Naive thymus-derived CD4-positive, alpha-beta T cell (primary cell): ENCODE measurements at regions of chr6 and their contacts with region 1.

Region 1: DNA sequence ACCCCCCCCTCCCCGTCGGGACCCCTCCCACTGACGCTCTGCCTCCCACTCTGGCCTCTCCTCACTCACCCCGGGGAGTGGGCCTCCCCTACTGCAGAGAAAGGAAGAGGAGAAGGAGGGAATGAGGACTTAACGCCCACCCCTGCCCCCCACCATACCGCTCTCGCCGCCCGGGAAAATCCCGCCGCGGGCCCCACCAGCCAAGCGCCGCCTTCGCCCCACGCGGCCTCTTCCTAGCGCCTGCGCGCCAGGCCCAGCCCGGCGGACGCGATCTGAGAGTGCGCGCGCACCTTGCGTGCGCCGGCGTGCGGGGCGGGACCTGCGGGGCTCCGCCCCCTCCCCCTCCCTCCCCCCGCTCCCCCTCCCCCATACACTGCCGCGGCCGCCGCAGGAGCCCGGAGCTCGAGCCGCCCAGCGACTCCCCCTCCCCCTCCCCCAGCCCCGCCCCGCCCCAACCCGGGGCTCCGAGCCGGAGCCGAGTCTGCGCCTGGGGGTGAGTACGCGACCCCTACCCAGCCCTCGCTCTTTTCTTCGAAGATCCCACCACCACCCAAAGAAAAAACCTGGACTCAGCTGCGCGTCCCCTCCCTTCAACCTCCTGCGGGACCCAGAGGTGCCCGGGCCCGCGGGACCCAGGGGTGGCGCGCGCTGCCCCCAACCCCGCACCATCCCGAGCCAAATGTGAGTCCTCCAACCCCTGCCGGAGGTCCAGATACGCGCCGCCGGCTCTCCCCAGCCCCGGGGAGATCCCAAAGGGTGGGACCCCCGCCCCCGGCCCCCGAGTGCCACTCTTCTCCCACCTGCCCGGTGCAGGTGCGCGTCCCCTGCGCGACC is at the starts of genes MRPL14 and TMEM63B:
- DNase-seq: peak; percentile 82 to 97 (median 90)
- ATAC-seq: peak; percentile 91
- H3K4me3 ChIP-seq: peak within 1 kb of the TSS; percentile 71
- H3K4me3 Mint-ChIP-seq: peak within 1 kb of the TSS; percentile 91 to 99 (median 96)
- H3K27ac ChIP-seq: peak within 1 kb of the TSS; percentile 97
- H3K27ac Mint-ChIP-seq: peak within 1 kb of the TSS; percentile 87 to 99 (median 96)
- H3K4me1 ChIP-seq: peaks cover 36 to 41% of the 10 kb centered on the region in 2 donors
- H3K4me1 Mint-ChIP-seq: peaks cover 46 to 75% (median 57%) of the 10 kb centered on the region in 7 donors
- H3K27me3 ChIP-seq: no peaks in the 10 kb centered on the region
- H3K27me3 Mint-ChIP-seq: no peaks in the 10 kb centered on the region
- total RNA-seq, gene MRPL14: 12.6 to 58.3 (median 15.8) TPM
- total RNA-seq, gene TMEM63B: 16.2 to 21.4 (median 18.1) TPM

Region 2: DNA sequence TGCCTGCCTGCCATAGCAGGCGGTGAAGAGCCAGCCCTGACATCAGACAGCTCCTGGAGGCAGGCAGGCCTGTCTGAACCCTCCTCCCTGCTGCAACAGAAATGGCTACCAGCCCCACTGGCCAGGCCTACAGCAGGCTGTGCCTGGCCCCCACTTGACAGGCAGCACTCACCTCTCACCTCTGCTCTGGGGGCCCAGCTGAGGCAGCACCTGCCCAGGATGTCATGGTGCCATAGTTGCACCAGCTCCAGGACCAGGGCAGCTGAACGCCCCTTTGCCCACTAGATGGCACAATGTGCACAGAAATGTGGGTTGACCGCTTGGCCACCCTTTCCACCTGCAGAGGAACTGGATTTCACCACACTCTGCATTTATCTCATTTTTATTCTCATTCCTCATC is 30.8 kb before region 1 on chr6:
- CTCF ChIA-PET with region 1: interaction called, 4 read pairs
- POLR2A ChIA-PET with region 1: no interaction called
- intact Hi-C with region 1: loop called in 1 of 2 experiments (anchors 2 kb)
- DNase-seq: peak; percentile 45 to 78 (median 68)
- ATAC-seq: peak; percentile 92
- H3K4me3 ChIP-seq: no peak overlapping the region
- H3K4me3 Mint-ChIP-seq: no peak overlapping the region
- H3K27ac ChIP-seq: no peak overlapping the region
- H3K27ac Mint-ChIP-seq: no peak overlapping the region
- H3K4me1 ChIP-seq: no peaks in the 10 kb centered on the region
- H3K4me1 Mint-ChIP-seq: peaks cover 0 to 10% (median 0%) of the 10 kb centered on the region in 7 donors
- H3K27me3 ChIP-seq: no peaks in the 10 kb centered on the region
- H3K27me3 Mint-ChIP-seq: no peaks in the 10 kb centered on the region

Region 3: GRCh38 chr6:44221291-44221960 is 94.0 kb after region 1 on chr6:
- CTCF ChIA-PET with region 1: no interaction called
- POLR2A ChIA-PET with region 1: no interaction called
- intact Hi-C with region 1: loop called in 1 of 2 experiments (anchors 1 kb)
- DNase-seq: peak; percentile 56 to 75 (median 71)
- ATAC-seq: peak; percentile 75
- H3K4me3 ChIP-seq: no peak overlapping the region
- H3K4me3 Mint-ChIP-seq: peak overlapping the region in 7 of 10 donors; percentile 27 to 93 (median 59)
- H3K27ac ChIP-seq: no peak overlapping the region
- H3K27ac Mint-ChIP-seq: peak overlapping the region in 5 of 9 donors; percentile 26 to 91 (median 48)
- H3K4me1 ChIP-seq: peaks cover 15 to 16% of the 10 kb centered on the region in 2 donors
- H3K4me1 Mint-ChIP-seq: peaks cover 6 to 48% (median 31%) of the 10 kb centered on the region in 7 donors
- H3K27me3 ChIP-seq: no peaks in the 10 kb centered on the region
- H3K27me3 Mint-ChIP-seq: peaks cover 0 to 18% (median 0%) of the 10 kb centered on the region in 5 donors

Region 4: GRCh38 chr6:44312901-44313788 is 185.7 kb after region 1 on chr6 and contains the start of gene AARS2:
- CTCF ChIA-PET with region 1: interaction called, 6 read pairs
- POLR2A ChIA-PET with region 1: no interaction called
- intact Hi-C with region 1: loop called in 1 of 2 experiments (anchors 1 kb)
- DNase-seq: peak; percentile 79 to 95 (median 88)
- ATAC-seq: peak; percentile 99
- H3K4me3 ChIP-seq: peak within 1 kb of the TSS; percentile 91
- H3K4me3 Mint-ChIP-seq: peak within 1 kb of the TSS; percentile 94 to 100 (median 96)
- H3K27ac ChIP-seq: peak within 1 kb of the TSS; percentile 89
- H3K27ac Mint-ChIP-seq: peak within 1 kb of the TSS; percentile 88 to 98 (median 94)
- H3K4me1 ChIP-seq: peaks cover 7 to 9% of the 10 kb centered on the region in 2 donors
- H3K4me1 Mint-ChIP-seq: peaks cover 16 to 32% (median 25%) of the 10 kb centered on the region in 7 donors
- H3K27me3 ChIP-seq: no peaks in the 10 kb centered on the region
- H3K27me3 Mint-ChIP-seq: peaks cover 0 to 13% (median 3%) of the 10 kb centered on the region in 5 donors
- total RNA-seq, gene AARS2: 13.5 to 29.8 (median 20.9) TPM

Region 5: GRCh38 chr6:46129629-46130511 is 2002.5 kb after region 1 on chr6 and contains the start of gene ENPP4:
- CTCF ChIA-PET with region 1: no interaction called
- POLR2A ChIA-PET with region 1: no interaction called
- intact Hi-C with region 1: loop called in 1 of 2 experiments (anchors 5 kb)
- DNase-seq: peak; percentile 78 to 98 (median 91)
- ATAC-seq: peak; percentile 100
- H3K4me3 ChIP-seq: peak within 1 kb of the TSS; percentile 98
- H3K4me3 Mint-ChIP-seq: peak within 1 kb of the TSS; percentile 94 to 99 (median 98)
- H3K27ac ChIP-seq: peak within 1 kb of the TSS; percentile 73
- H3K27ac Mint-ChIP-seq: peak within 1 kb of the TSS; percentile 86 to 97 (median 92)
- H3K4me1 ChIP-seq: peaks cover 15 to 18% of the 10 kb centered on the region in 2 donors
- H3K4me1 Mint-ChIP-seq: peaks cover 19 to 59% (median 46%) of the 10 kb centered on the region in 7 donors
- H3K27me3 ChIP-seq: no peaks in the 10 kb centered on the region
- H3K27me3 Mint-ChIP-seq: peaks cover 0 to 4% (median 0%) of the 10 kb centered on the region in 5 donors
- total RNA-seq, gene ENPP4: 3.8 to 9.8 (median 8.2) TPM